Left colon (tissue), 2 donors: ENCODE measurements at regions of chr22 and their contacts with region 1.

Region 1: GRCh38 chr22:25475257-25476022 is 89.0 kb upstream of the GRK3 start:
- DNase-seq: no peak
- ATAC-seq: peak; percentile 24

Region 2: DNA sequence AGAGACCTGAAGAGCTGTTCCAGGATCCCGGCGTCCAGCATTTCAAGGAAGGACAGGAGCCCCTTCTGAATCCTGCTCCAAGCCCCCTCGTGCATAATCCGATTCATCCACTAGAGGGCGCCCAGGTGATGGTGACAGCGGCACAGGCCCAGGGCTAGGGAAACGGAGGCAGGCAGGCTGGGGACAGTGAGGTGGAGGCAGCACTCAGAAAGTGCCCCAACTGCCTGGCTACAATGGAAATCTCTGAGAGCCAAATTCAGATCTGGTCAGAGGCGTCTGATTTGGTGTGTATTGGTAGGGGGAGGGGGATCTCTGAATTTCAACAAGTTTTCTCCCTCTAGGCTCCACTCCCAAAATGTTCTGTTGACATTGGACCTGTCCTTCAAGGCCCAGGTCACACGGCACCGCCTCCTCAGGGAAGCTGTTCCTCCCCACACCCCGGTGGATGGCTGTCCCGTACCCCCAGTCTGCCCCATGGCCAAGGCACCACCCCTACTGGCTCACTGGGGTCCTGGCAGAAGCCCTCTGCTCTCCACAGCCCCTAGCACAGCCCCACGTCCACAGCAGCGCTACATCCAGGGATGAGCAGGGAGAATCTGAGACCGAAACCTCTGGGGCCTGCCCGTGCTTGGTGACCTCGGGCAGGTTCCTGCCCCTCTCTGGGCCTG is 113.1 kb before region 1 on chr22:
- intact Hi-C with region 1: no loop called
- DNase-seq: peak; percentile 46 to 78
- ATAC-seq: peak; percentile 31

Region 3: DNA sequence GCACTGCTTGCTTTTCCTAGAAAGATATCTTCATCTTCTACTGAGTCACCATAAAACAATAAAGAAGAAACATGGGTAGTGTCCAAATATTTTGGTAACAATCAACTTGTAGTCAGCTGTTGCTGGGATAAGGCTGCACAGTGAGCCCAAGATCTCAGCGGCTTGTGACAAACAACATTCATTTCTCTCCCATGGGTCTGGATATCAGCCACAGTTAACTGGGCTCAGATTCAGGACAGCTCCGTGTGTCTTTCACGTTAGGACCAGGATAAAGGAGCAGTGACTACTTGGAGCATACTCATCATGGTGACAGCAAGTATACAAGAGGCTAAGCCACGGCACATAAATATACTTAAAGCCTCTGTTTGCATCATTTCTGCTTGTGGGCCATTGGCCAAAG is 61.1 kb after region 1 on chr22:
- intact Hi-C with region 1: no loop called
- DNase-seq: no peak
- ATAC-seq: no peak

Region 4: DNA sequence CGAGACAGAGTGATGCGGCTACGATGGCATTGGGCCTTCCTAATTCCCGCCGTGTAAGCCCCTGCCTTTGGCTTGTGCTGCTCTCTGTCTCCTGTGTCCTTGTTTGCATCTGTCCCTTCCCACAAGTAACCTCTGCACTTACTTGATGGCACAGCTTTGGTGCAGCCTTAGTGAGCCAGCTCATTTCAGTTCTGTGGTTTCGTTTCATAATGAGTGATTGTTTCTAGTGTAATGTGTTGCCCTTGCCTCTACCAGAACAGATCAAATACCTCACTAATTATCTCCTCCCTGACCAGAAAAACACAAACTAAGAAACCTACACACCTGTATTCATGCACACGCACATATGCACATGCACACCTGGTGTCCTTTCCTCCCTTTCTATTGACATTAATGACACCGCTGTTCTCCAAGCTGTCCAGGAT is 147.9 kb after region 1 on chr22:
- intact Hi-C with region 1: no loop called
- DNase-seq: no peak
- ATAC-seq: no peak

Region 5: DNA sequence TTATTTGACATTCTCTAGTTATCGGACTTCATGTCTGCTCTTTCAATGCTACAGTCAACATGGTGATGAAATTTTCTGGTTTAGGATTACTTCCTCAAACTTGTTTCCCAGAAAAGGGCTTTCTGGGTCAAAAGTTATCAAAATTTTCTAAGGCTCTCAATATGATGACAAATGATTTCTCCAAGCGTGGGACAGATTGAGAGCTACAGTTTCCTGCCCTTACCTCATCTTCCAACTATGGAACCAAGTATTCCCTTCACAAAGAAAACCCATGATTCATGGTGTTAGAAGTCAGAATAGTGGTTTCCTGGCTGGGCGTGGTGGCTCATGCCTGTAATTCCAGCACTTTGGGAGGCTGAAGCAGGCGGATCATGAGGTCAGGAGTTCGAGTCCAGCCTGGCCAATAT is 284.4 kb after region 1 on chr22:
- intact Hi-C with region 1: loop called in 1 of 2 experiments (anchors 10 kb)
- DNase-seq: no peak
- ATAC-seq: no peak

Region 6: GRCh38 chr22:25869771-25870170 is 394.3 kb after region 1 on chr22:
- intact Hi-C with region 1: no loop called
- DNase-seq: no peak
- ATAC-seq: no peak